A549 (cell line): ENCODE measurements at regions of chr19 and their contacts with region 1.

Region 1: GRCh38 chr19:41263850-41264580 is at the start of gene HNRNPUL1:
- DNase-seq: peak; percentile 100
- ATAC-seq: peak; percentile 71 to 80
- H3K4me3 ChIP-seq: peak within 1 kb of the TSS; percentile 88
- H3K27ac ChIP-seq: peak within 1 kb of the TSS; percentile 96 to 99
- H3K4me1 ChIP-seq: peaks cover 26% of the 10 kb centered on the region
- CTCF ChIP-seq: peak; percentile 44
- EP300 ChIP-seq: no peak
- POLR2A ChIP-seq: peak; percentile 29
- RAD21 ChIP-seq: no peak
- polyA plus RNA-seq, gene HNRNPUL1: 89.5 and 117 TPM in 2 replicates

Region 2: DNA sequence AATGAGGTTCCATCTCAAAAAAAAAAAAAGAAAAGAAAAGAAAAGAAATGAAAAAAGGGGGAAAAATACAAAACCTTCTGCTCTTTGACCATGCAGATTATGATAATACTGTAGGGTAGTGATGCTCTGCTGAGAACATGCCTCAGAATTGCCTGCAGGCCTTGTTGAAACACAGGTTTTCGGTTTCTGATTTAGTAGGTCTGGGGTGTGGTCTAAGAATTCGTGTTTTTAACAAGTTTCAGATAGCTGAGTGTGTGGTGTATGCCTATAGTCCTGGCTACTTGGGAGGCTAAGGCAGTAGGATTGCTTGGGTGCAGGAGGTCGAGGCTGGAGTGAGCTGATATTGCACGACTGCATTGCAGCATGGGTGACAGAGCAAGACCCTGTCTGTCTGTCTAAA is 287.9 kb before region 1 on chr19:
- CTCF ChIA-PET with region 1: no interaction called
- POLR2A ChIA-PET with region 1: no interaction called
- DNase-seq: no peak
- ATAC-seq: no peak
- H3K4me3 ChIP-seq: no peak overlapping the region
- H3K27ac ChIP-seq: no peak overlapping the region
- H3K4me1 ChIP-seq: no peaks in the 10 kb centered on the region
- CTCF ChIP-seq: no peak
- EP300 ChIP-seq: no peak
- POLR2A ChIP-seq: no peak
- RAD21 ChIP-seq: no peak

Region 3: DNA sequence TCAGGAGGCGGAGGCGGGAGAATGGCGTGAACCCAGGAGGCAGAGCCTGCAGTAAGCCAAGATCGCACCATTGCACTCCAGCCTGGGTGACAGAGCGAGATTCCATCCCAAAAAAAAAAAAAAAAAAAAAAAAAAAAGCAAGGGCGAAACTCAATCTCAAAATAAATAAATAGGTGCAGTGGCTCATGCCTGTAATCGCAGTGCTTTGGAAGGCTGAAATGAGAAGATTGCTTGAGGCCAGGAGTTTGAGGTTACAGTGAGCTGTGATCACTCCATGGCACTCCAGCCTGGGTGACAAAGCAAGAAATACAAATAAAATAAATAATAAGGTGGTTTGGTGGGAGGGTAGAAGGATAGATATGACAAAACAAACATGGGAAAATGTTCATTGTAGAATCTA is 110.0 kb before region 1 on chr19:
- CTCF ChIA-PET with region 1: interaction called, 14 read pairs
- POLR2A ChIA-PET with region 1: interaction called, 6 read pairs
- DNase-seq: no peak
- ATAC-seq: no peak
- H3K4me3 ChIP-seq: no peak overlapping the region
- H3K27ac ChIP-seq: no peak overlapping the region
- H3K4me1 ChIP-seq: peaks cover 4% of the 10 kb centered on the region
- CTCF ChIP-seq: no peak
- EP300 ChIP-seq: no peak
- POLR2A ChIP-seq: no peak
- RAD21 ChIP-seq: no peak

Region 4: DNA sequence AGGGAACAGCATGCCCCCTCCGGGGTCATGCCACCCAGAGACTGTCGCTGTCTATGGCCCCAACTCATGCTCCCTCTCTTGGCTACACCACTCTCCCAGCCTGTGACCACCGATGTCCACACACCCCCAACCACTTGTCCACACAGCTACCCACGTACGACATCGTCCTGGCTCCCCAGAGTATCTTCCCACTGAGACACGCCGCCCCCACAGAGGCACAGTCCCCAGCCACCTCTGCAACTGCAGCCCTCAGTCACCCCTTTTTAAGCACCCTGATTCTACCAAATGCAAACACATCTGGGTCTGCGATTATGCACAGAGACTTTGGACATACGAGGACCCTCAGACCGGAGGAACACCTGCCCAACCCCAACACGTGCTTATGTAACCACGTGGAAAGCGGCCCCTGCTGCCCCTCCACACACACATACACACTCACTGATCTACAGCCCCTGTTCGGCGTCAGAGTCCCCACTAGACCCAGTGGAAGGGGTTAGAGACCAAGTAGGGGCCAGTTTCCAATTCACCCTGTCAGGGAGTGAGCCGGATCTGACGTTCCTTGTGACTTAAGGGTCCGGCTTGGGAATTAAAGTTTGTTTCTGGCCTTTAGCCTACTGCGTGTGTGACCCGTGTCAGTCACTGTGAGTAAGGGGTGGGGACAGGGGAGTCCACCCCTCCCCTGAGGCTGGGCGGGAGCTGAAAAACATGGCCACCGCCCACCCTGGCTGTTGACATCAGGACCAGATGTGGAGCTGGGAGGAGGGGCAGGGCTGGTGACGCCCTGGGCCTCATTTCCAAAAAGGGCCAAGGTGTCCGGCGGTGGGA is 56.9 kb before region 1 on chr19:
- CTCF ChIA-PET with region 1: interaction called, 1,023 read pairs
- POLR2A ChIA-PET with region 1: interaction called, 121 read pairs
- DNase-seq: no peak
- ATAC-seq: no peak
- H3K4me3 ChIP-seq: no peak overlapping the region
- H3K27ac ChIP-seq: no peak overlapping the region
- H3K4me1 ChIP-seq: no peaks in the 10 kb centered on the region
- CTCF ChIP-seq: no peak
- EP300 ChIP-seq: no peak
- POLR2A ChIP-seq: no peak
- RAD21 ChIP-seq: no peak

Region 5: DNA sequence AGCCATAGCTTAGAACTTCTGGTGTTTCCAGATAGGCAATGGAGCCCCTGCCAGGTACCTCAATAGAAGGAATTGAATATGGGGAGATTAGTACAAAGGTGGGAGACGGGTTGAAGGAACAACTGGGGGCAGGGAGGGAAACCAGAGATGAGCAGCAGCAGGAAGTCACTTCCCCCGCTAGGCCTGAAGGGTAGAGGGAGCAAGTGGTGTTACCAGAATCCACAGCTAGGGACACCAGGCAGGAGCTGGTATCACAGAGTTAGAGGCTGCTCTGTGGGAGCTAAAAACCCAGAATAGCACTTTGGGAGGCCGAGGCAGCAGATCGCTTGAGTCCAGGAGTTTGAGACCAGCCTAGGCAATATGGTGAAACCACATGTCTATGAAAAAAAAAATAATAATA is 15.1 kb before region 1 on chr19:
- CTCF ChIA-PET with region 1: interaction called, 246 read pairs
- POLR2A ChIA-PET with region 1: interaction called, 5 read pairs
- DNase-seq: no peak
- ATAC-seq: peak; percentile 67 to 68; a peak in 5 of 6 replicates
- H3K4me3 ChIP-seq: no peak overlapping the region
- H3K27ac ChIP-seq: no peak overlapping the region
- H3K4me1 ChIP-seq: no peaks in the 10 kb centered on the region
- CTCF ChIP-seq: no peak
- EP300 ChIP-seq: no peak
- POLR2A ChIP-seq: no peak
- RAD21 ChIP-seq: no peak

Region 6: DNA sequence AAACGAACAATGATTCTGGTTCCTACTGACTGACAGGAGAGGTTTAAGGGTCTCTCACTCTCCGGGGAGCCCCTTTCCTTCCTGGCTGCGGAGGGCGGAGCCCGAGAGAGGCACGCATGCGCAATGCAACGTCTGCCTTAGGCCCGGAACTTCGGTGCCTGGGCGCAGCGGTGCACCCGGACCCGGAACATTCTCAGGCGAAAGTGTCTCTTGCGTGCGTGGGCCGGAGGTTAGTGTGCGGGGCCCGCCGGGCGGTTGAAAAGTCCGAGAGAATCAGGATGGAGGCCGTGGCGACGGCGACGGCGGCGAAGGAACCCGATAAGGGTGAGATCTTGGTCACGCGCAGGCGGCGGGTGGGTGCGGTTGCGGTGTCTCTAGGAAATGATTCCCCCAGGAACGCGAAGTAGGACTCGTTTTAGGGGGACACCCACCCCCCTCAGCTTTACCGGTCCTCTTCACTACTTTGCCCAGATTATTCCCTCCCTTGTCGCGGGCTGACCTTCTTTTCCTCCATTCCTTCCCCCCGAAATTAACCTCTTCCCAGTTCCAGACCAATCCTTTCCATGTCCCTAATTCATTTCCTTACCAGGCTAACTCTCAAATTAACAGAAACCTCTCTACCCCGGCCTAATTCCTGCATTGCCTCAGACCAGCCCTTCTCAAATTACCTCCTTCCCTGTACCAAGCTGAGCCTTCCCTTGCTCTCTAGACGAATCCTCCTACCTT is 46.2 kb after region 1 on chr19 and contains the start of gene CCDC97:
- CTCF ChIA-PET with region 1: interaction called, 183 read pairs
- POLR2A ChIA-PET with region 1: interaction called, 28 read pairs
- DNase-seq: peak; percentile 94 to 99
- ATAC-seq: peak; percentile 60 to 78
- H3K4me3 ChIP-seq: peak within 1 kb of the TSS; percentile 57
- H3K27ac ChIP-seq: peak within 1 kb of the TSS; percentile 91 to 92
- H3K4me1 ChIP-seq: peaks cover 24% of the 10 kb centered on the region
- CTCF ChIP-seq: no peak
- EP300 ChIP-seq: peak in 1 of 2 experiments; percentile 58; a peak in 1 of 5 replicates
- POLR2A ChIP-seq: no peak; the same call in none of the 2 replicates
- RAD21 ChIP-seq: peak; percentile 19 to 50
- polyA plus RNA-seq, gene CCDC97: 18.7 and 21.4 TPM in 2 replicates